Caco-2 (cell line): ENCODE measurements at regions of chr1 and their contacts with region 1.

Region 1: GRCh38 chr1:203038891-203039608 is 12.8 kb downstream of the PPFIA4 start:
- DNase-seq: peak; percentile 74 to 80
- H3K4me3 ChIP-seq: no peak overlapping the region
- H3K4me3 Mint-ChIP-seq: no peak overlapping the region
- H3K27ac Mint-ChIP-seq: no peak overlapping the region
- H3K4me1 ChIP-seq: peaks cover 8% of the 10 kb centered on the region; the same call in 1 of the 2 replicates
- H3K4me1 Mint-ChIP-seq: peaks cover 21% of the 10 kb centered on the region
- H3K27me3 ChIP-seq: no peaks in the 10 kb centered on the region
- H3K27me3 Mint-ChIP-seq: no peaks in the 10 kb centered on the region
- CTCF ChIP-seq: peak; percentile 87 to 93

Region 2: GRCh38 chr1:203026031-203026989 is 12.7 kb before region 1 on chr1 and contains the start of gene PPFIA4:
- CTCF ChIA-PET with region 1: interaction called, 14 read pairs
- POLR2A ChIA-PET with region 1: no interaction called
- intact Hi-C with region 1: no loop called
- DNase-seq: peak; percentile 85 to 96
- H3K4me3 ChIP-seq: peak within 1 kb of the TSS; percentile 96
- H3K4me3 Mint-ChIP-seq: peak within 1 kb of the TSS; percentile 70
- H3K27ac Mint-ChIP-seq: peak within 1 kb of the TSS; percentile 68
- H3K4me1 ChIP-seq: peaks cover 6% of the 10 kb centered on the region
- H3K4me1 Mint-ChIP-seq: peaks cover 9% of the 10 kb centered on the region
- H3K27me3 ChIP-seq: no peaks in the 10 kb centered on the region
- H3K27me3 Mint-ChIP-seq: no peaks in the 10 kb centered on the region
- CTCF ChIP-seq: peak in 1 of 2 experiments; percentile 15
- total RNA-seq, gene PPFIA4: 8.7 and 9.4 TPM in 2 replicates

Region 3: DNA sequence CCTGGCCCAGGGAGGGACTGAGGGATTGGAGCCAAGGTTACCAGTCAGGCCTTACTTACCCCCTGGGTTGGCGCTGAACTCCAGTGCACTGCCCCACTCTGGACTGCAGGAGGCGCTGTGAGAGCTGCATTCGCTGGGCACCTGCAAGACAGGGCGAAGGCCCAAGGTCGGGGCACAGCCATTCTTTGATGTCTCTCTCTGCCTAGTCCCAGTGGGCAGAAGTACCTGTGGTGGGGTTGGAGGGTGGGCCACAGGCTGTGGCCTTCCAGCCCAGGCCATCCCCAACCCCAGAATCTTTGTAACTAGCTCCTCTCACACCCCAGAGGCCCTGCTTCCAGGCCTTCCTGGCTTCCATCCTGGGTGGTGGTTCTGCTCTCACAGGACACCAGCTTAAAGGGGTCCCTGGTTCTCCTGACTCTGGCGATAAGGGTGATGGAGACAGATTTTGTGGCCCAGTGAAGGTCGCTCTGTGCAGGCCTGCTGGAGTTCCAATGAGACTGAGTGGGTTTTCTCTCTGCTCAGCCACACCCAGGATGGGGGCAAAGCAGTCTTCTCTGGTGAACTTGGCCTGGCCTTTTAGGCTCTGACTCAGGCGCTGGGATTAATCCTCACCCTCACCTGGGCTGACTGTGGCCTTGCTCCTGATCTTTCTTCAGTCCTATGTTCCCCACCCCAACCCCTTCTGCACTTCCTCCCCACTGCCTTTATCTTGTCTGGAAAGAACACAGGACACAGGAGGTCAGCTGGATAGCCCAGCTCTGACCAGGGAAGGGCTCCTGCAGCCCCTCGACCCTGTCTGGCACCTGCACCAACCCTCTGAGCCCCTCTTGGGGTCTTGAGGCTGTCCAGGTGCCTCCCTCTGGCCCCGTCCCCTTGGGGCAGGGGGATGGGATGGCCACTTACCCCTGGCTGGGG is 45.8 kb after region 1 on chr1:
- CTCF ChIA-PET with region 1: interaction called, 4 read pairs
- POLR2A ChIA-PET with region 1: no interaction called
- intact Hi-C with region 1: loop called (anchors 5 kb)
- DNase-seq: no peak
- H3K4me3 ChIP-seq: no peak overlapping the region
- H3K4me3 Mint-ChIP-seq: no peak overlapping the region
- H3K27ac Mint-ChIP-seq: no peak overlapping the region
- H3K4me1 ChIP-seq: no peaks in the 10 kb centered on the region
- H3K4me1 Mint-ChIP-seq: no peaks in the 10 kb centered on the region
- H3K27me3 ChIP-seq: no peaks in the 10 kb centered on the region
- H3K27me3 Mint-ChIP-seq: no peaks in the 10 kb centered on the region
- CTCF ChIP-seq: peak; percentile 21 to 44

Region 4: DNA sequence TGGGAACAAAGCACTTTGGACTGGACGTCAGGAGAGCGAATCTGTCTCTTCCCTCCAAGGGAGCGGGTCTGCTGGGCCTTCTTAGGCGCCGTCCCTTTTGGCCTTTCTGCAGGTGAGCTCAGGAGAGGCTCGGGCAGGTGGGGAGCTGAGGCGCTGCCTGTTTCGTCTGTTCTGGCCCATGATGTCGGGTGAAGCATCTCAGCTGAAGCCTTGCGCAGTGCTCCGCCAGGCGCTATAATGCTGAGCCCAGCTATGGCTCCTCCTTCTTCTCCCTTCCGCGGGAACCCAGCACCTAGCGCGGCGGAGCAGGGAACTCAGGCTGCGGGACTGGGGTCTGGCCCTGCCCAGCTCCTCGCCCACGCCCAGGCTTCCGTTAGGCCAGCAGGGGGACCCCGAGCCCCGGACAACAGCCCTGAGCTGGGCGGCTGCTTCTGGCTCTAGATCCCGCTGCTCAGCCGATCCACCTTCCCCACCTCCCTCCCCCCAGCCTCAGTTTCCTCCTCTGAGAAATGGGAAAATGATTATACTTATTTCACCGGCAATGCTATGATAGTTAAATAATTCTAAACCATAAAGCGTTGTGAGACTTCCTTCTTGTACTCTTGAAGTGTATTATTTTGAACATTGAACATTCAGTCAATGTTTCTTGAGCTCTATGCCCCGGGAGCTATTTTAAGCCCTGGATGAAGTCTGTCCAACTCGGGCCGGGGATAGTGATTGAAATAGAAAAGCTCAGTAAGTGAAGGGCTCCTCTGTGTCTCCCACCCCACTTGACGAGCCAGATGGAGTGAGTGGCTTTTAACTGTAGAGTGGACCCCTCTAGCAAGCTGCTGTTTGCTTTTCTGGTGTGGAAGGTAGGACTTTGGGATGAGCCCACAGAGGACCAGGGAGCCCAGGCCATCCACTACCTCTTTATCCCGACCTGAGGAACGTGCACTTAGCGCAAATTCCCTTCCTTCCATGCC is 78.8 kb after region 1 on chr1:
- CTCF ChIA-PET with region 1: interaction called, 11 read pairs
- POLR2A ChIA-PET with region 1: no interaction called
- intact Hi-C with region 1: loop called (anchors 2 kb)
- DNase-seq: peak; percentile 80 to 87
- H3K4me3 ChIP-seq: no peak overlapping the region
- H3K4me3 Mint-ChIP-seq: no peak overlapping the region
- H3K27ac Mint-ChIP-seq: no peak overlapping the region
- H3K4me1 ChIP-seq: no peaks in the 10 kb centered on the region
- H3K4me1 Mint-ChIP-seq: no peaks in the 10 kb centered on the region
- H3K27me3 ChIP-seq: no peaks in the 10 kb centered on the region
- H3K27me3 Mint-ChIP-seq: no peaks in the 10 kb centered on the region
- CTCF ChIP-seq: peak; percentile 89 to 93

Region 5: GRCh38 chr1:203127666-203128430 is 88.8 kb after region 1 on chr1 and contains the start of gene ADORA1:
- CTCF ChIA-PET with region 1: interaction called, 36 read pairs
- POLR2A ChIA-PET with region 1: no interaction called
- intact Hi-C with region 1: no loop called
- DNase-seq: peak; percentile 66 to 78
- H3K4me3 ChIP-seq: peak within 1 kb of the TSS; percentile 50
- H3K4me3 Mint-ChIP-seq: peak within 1 kb of the TSS; percentile 84
- H3K27ac Mint-ChIP-seq: peak within 1 kb of the TSS; percentile 65
- H3K4me1 ChIP-seq: peaks cover 16% of the 10 kb centered on the region
- H3K4me1 Mint-ChIP-seq: peaks cover 26% of the 10 kb centered on the region
- H3K27me3 ChIP-seq: no peaks in the 10 kb centered on the region
- H3K27me3 Mint-ChIP-seq: no peaks in the 10 kb centered on the region
- CTCF ChIP-seq: peak; percentile 11 to 46
- total RNA-seq, gene ADORA1: 46.0 and 50.4 TPM in 2 replicates

Region 6: GRCh38 chr1:203172128-203173010 is 133.3 kb after region 1 on chr1:
- CTCF ChIA-PET with region 1: interaction called, 6 read pairs
- POLR2A ChIA-PET with region 1: no interaction called
- intact Hi-C with region 1: loop called (anchors 2 kb)
- DNase-seq: peak; percentile 63 to 80
- H3K4me3 ChIP-seq: no peak overlapping the region
- H3K4me3 Mint-ChIP-seq: no peak overlapping the region
- H3K27ac Mint-ChIP-seq: peak overlapping the region; percentile 69
- H3K4me1 ChIP-seq: peaks cover 70% of the 10 kb centered on the region
- H3K4me1 Mint-ChIP-seq: peaks cover 65% of the 10 kb centered on the region
- H3K27me3 ChIP-seq: no peaks in the 10 kb centered on the region
- H3K27me3 Mint-ChIP-seq: no peaks in the 10 kb centered on the region
- CTCF ChIP-seq: peak; percentile 81 to 82

Region 7: DNA sequence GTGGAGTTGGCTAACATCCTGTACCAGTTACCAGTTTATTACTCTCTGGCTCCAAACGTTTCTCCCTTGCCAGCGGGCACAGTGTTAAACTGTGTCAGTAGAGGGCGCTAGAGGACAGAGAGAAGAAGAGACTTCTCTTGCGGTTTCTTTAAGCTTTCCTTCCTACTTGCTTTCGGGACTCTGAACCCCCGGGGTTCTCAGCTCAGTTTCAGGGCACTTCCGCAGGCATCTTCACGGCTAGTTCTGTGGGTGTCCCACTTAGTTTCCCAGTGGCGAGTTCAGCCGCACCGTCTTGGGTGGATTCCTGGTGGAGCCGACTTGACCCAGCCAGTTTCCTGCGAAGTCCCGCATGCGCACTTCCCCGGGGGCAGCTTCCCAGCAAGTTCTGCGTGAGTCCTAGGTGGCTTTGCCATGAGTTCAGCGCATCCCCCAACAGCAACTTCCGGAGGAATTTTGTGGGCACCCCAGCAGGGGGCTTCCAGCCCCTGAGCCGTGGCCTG is 228.3 kb after region 1 on chr1:
- CTCF ChIA-PET with region 1: interaction called, 90 read pairs
- POLR2A ChIA-PET with region 1: no interaction called
- intact Hi-C with region 1: loop called (anchors 1 kb)
- DNase-seq: peak; percentile 73 to 78
- H3K4me3 ChIP-seq: no peak overlapping the region
- H3K4me3 Mint-ChIP-seq: no peak overlapping the region
- H3K27ac Mint-ChIP-seq: no peak overlapping the region
- H3K4me1 ChIP-seq: peaks cover 6% of the 10 kb centered on the region; the same call in 1 of the 2 replicates
- H3K4me1 Mint-ChIP-seq: peaks cover 12% of the 10 kb centered on the region
- H3K27me3 ChIP-seq: no peaks in the 10 kb centered on the region
- H3K27me3 Mint-ChIP-seq: no peaks in the 10 kb centered on the region
- CTCF ChIP-seq: peak; percentile 80 to 83